H1 (cell line): ENCODE measurements at regions of chr17 and their contacts with region 1.

Region 1: GRCh38 chr17:44533533-44534246 is 23.6 kb upstream of the FZD2 start:
- DNase-seq: peak in 1 of 2 experiments; percentile 97
- H3K4me3 ChIP-seq: no peak overlapping the region
- H3K27ac ChIP-seq: no peak overlapping the region
- H3K4me1 ChIP-seq: peaks cover 0 to 15% (median 10%) of the 10 kb centered on the region in 4 experiments; a peak in 6 of 7 replicates
- H3K27me3 ChIP-seq: peaks cover 3 to 27% (median 13%) of the 10 kb centered on the region in 4 experiments
- CTCF ChIP-seq: peak; percentile 92 to 97 (median 96)
- EP300 ChIP-seq: no peak
- POLR2A ChIP-seq: no peak
- RAD21 ChIP-seq: peak; percentile 99 to 100

Region 2: DNA sequence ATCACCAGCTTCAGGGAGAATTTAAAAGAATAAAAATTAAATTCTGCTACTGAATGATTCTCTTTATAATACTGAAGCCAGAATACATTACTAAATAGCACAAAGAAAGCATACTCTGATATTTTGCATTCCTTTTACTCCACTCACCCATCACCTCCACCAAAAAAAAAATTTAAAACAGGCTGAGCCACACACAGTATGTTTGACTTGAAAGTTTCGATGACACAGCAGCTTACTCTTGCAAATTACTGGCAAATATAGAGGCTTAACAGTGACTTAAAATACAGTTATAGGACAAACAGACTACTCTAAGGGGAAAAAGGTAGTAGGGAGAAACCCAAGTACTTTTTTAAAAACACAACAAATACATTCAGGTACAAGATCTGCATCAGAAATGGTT is 69.7 kb before region 1 on chr17:
- CTCF ChIA-PET with region 1: no interaction called
- POLR2A ChIA-PET with region 1: no interaction called
- DNase-seq: no peak
- H3K4me3 ChIP-seq: no peak overlapping the region
- H3K27ac ChIP-seq: no peak overlapping the region
- H3K4me1 ChIP-seq: no peaks in the 10 kb centered on the region; a peak in 1 of 7 replicates
- H3K27me3 ChIP-seq: no peaks in the 10 kb centered on the region
- CTCF ChIP-seq: no peak
- EP300 ChIP-seq: no peak
- POLR2A ChIP-seq: no peak
- RAD21 ChIP-seq: no peak

Region 3: GRCh38 chr17:44522883-44523671 is 10.6 kb before region 1 on chr17:
- CTCF ChIA-PET with region 1: interaction called, 59 read pairs
- POLR2A ChIA-PET with region 1: interaction called, 3 read pairs
- DNase-seq: peak in 1 of 2 experiments; percentile 94
- H3K4me3 ChIP-seq: no peak overlapping the region
- H3K27ac ChIP-seq: no peak overlapping the region
- H3K4me1 ChIP-seq: no peaks in the 10 kb centered on the region
- H3K27me3 ChIP-seq: no peaks in the 10 kb centered on the region
- CTCF ChIP-seq: peak; percentile 81 to 87 (median 83)
- EP300 ChIP-seq: no peak
- POLR2A ChIP-seq: no peak
- RAD21 ChIP-seq: peak; percentile 90 to 92

Region 4: DNA sequence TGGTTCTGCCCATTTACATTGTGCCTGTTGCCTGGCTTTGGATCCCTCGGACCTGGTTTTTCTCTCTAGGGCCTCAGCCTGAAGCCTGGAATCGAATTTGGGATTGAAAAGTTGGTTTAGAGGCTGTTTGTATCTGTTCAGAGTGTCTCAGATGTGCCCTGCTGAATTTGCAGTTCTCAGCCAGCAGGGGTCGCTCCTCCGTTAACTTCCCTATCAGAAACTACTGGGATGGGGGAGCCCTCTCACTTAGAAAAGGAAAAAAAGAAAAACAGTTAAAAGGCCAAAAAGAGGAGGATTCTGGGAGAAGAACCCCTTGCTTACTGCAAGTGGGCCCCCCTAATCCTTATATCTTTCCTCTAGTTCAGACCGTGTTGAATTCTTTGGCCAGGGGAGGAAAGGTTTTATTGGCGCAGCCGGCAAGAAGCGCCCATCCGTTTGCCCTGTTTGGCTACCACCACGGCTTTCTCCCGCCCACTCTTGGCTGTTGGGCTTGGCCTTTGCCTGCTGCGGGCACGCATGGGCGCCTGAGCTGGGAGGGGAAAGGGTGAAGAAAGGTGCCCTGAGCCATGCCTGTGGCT is 32.3 kb after region 1 on chr17:
- CTCF ChIA-PET with region 1: interaction called, 68 read pairs
- POLR2A ChIA-PET with region 1: interaction called, 9 read pairs
- DNase-seq: no peak
- H3K4me3 ChIP-seq: no peak overlapping the region
- H3K27ac ChIP-seq: no peak overlapping the region
- H3K4me1 ChIP-seq: peaks cover 0 to 14% (median 6%) of the 10 kb centered on the region in 4 experiments; a peak in 5 of 7 replicates
- H3K27me3 ChIP-seq: peaks cover 0 to 18% (median 6%) of the 10 kb centered on the region in 4 experiments; a peak in 5 of 7 replicates
- CTCF ChIP-seq: peak; percentile 33 to 47 (median 38)
- EP300 ChIP-seq: no peak
- POLR2A ChIP-seq: no peak
- RAD21 ChIP-seq: peak; percentile 28 to 46; a peak in 3 of 4 replicates

Region 5: GRCh38 chr17:44591206-44591605 is 57.5 kb after region 1 on chr17:
- CTCF ChIA-PET with region 1: interaction called, 10 read pairs
- POLR2A ChIA-PET with region 1: no interaction called
- DNase-seq: no peak
- H3K4me3 ChIP-seq: no peak overlapping the region
- H3K27ac ChIP-seq: no peak overlapping the region
- H3K4me1 ChIP-seq: no peaks in the 10 kb centered on the region; a peak in 1 of 7 replicates
- H3K27me3 ChIP-seq: no peaks in the 10 kb centered on the region
- CTCF ChIP-seq: no peak
- EP300 ChIP-seq: no peak
- POLR2A ChIP-seq: no peak
- RAD21 ChIP-seq: no peak

Region 6: GRCh38 chr17:44623070-44623725 is 89.5 kb after region 1 on chr17:
- CTCF ChIA-PET with region 1: interaction called, 84 read pairs
- POLR2A ChIA-PET with region 1: no interaction called
- DNase-seq: no peak
- H3K4me3 ChIP-seq: no peak overlapping the region
- H3K27ac ChIP-seq: no peak overlapping the region
- H3K4me1 ChIP-seq: peaks cover 0 to 7% (median 3%) of the 10 kb centered on the region in 4 experiments; a peak in 5 of 7 replicates
- H3K27me3 ChIP-seq: no peaks in the 10 kb centered on the region
- CTCF ChIP-seq: peak in 2 of 3 experiments; percentile 21 to 42; a peak in 2 of 4 replicates
- EP300 ChIP-seq: no peak
- POLR2A ChIP-seq: no peak
- RAD21 ChIP-seq: peak; percentile 46 to 59

Region 7: DNA sequence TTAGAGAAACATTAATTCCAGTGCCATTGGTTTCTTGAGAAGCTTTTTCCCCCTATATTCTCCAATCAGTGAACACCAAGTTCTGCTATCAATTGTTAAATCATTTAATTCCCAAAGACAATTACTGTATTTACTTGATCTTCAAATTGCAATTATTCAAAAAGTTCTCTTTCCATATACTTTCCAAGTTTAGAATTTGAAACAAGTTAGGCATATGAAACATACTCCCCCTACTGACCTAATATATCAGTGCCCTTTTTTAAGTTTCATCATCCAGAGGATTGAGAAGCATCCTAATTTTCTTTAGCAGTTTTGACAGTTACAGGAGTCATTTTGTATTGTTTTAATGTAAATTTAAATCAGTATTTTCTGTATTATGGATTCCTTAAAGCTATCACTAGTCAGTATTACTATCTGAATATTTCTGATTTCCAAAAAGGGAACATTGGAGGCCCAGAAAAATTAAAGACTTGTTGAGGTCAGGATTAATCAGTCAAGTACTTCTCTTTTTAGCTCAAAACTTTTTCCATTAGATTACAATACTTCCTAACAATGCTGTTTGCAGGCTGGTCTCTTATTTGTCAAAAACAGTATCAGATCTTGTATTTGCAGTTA is 138.9 kb after region 1 on chr17:
- CTCF ChIA-PET with region 1: interaction called, 22 read pairs
- POLR2A ChIA-PET with region 1: no interaction called
- DNase-seq: no peak
- H3K4me3 ChIP-seq: no peak overlapping the region
- H3K27ac ChIP-seq: no peak overlapping the region
- H3K4me1 ChIP-seq: no peaks in the 10 kb centered on the region
- H3K27me3 ChIP-seq: no peaks in the 10 kb centered on the region
- CTCF ChIP-seq: peak in 2 of 3 experiments; percentile 18 to 54; a peak in 2 of 4 replicates
- EP300 ChIP-seq: no peak
- POLR2A ChIP-seq: no peak
- RAD21 ChIP-seq: peak in 1 of 2 experiments; percentile 46